SK-N-SH (cell line): ENCODE measurements at regions of chr10 and their contacts with region 1.

Region 1: GRCh38 chr10:73940634-73941221 is 29.8 kb downstream of the PLAU start:
- DNase-seq: peak; percentile 91
- H3K4me3 ChIP-seq: peak overlapping the region in 1 of 2 experiments; percentile 14; a peak in 1 of 4 replicates
- H3K27ac ChIP-seq: peak overlapping the region in 1 of 2 experiments; percentile 12; a peak in 1 of 4 replicates
- H3K4me1 ChIP-seq: peaks cover 0 to 10% of the 10 kb centered on the region in 2 experiments; a peak in 2 of 4 replicates
- H3K27me3 ChIP-seq: no peaks in the 10 kb centered on the region
- CTCF ChIP-seq: peak; percentile 97
- EP300 ChIP-seq: no peak
- RAD21 ChIP-seq: peak; percentile 84

Region 2: GRCh38 chr10:73837072-73837471 is 103.7 kb before region 1 on chr10:
- CTCF ChIA-PET with region 1: interaction called, 11 read pairs
- POLR2A ChIA-PET with region 1: no interaction called
- DNase-seq: no peak
- H3K4me3 ChIP-seq: no peak overlapping the region
- H3K27ac ChIP-seq: peak overlapping the region in 1 of 2 experiments; percentile 56; a peak in 2 of 4 replicates
- H3K4me1 ChIP-seq: no peaks in the 10 kb centered on the region; a peak in 1 of 4 replicates
- H3K27me3 ChIP-seq: no peaks in the 10 kb centered on the region
- CTCF ChIP-seq: no peak
- EP300 ChIP-seq: no peak
- RAD21 ChIP-seq: no peak

Region 3: DNA sequence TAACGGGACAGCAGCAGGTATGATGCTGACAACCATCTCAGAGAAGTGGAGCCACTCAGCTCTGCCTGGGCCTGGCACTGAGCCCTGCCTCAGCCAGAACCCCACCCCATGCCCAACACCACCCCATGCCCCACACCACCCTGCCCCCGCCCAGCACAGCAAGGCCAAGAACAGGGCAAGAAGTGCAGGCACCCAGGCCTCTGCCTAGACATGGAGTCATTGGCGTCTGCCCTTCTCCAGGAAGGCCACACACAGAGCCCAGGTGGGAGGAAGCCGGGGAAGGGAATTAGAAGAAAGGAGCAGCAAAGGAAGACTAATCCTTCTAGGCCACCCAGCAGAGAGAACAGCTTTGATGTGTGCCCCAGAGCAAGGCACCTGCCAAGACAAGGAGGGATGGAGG is 85.3 kb before region 1 on chr10:
- CTCF ChIA-PET with region 1: interaction called, 50 read pairs
- POLR2A ChIA-PET with region 1: no interaction called
- DNase-seq: no peak
- H3K4me3 ChIP-seq: no peak overlapping the region
- H3K27ac ChIP-seq: no peak overlapping the region
- H3K4me1 ChIP-seq: peaks cover 0 to 12% of the 10 kb centered on the region in 2 experiments; a peak in 1 of 4 replicates
- H3K27me3 ChIP-seq: no peaks in the 10 kb centered on the region
- CTCF ChIP-seq: no peak
- EP300 ChIP-seq: no peak
- RAD21 ChIP-seq: no peak

Region 4: DNA sequence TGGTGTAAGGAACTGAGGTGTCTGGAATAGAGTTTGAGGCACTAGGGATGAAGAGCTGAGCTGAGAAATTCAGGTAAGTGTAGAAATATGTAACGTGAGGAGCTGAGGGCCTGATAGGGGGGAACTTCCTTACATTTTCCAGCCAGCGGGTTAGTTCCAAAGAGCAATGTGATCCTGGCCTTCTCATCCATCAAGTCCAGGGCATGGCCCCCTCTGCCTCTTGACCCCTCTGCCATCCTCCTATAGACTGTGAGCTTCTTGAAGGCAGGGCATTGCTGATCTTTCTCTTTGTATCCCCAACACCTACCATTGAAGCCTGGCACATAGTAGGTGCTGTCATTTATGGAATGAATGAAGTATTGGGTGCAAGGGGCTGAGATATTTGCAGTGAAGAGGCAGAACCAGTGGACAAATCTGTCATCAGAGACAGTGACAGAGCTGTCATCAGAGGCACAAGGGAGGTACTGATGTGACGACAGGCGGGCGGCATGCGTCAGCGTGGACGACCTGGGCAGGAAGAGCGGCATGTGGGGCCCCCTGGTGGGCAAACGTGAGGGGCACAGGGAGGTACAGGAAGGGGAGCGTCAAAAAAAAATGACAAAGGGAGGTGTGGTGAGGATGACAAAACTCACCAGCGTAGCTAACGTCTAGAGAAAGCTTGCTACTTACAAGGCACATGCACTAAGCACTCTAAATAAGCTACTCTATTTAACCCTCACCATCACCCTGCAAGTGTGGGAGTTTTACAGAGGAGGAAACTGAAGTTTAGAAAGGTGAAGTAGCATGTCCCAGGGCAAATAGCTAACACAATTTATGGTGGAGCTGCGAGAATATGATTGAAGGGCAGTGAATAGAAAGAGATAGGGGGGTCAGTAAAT is 61.2 kb before region 1 on chr10:
- CTCF ChIA-PET with region 1: interaction called, 472 read pairs
- POLR2A ChIA-PET with region 1: no interaction called
- DNase-seq: peak; percentile 89
- H3K4me3 ChIP-seq: no peak overlapping the region; a peak in 1 of 4 replicates
- H3K27ac ChIP-seq: no peak overlapping the region
- H3K4me1 ChIP-seq: peaks cover 3% of the 10 kb centered on the region in 2 experiments; a peak in 2 of 4 replicates
- H3K27me3 ChIP-seq: no peaks in the 10 kb centered on the region
- CTCF ChIP-seq: peak; percentile 91
- EP300 ChIP-seq: no peak
- RAD21 ChIP-seq: peak; percentile 87

Region 5: DNA sequence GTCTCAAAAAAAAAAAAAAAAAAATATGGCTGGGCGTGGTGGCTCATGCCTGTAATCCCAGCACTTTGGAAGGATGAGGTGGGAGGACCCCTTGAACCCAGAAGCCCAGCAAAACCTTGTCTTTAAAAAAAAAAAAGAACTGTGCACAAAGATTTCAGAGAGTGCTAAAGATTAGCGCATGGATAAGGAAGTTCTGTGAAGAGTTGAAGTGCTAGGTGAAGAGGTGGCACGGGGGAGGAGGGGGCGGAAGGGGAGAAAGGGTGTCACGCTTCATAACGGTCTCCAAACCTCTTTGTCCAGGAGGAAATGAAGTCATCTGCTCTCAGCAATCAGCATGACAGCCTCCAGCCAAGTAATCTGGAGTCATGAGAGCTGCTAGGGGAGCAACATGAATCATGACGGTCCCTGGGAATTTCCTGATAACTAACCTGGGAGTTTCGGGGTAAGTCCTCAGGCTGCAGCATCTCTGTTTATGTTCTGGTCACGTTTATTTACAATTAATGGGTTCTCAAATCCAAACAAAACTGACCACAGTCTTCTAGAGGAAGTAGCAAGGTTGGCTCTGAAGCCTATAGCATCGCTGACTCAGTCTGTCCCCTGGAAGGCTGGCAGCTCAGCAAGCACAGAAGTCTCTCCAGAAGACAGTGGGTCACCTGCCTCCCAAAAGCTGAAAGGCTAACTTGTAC is 31.7 kb before region 1 on chr10:
- CTCF ChIA-PET with region 1: interaction called, 19 read pairs
- POLR2A ChIA-PET with region 1: no interaction called
- DNase-seq: no peak
- H3K4me3 ChIP-seq: 0 out of 4 replicates have a peak overlapping the region, but pooled peaks of 1 of the 2 experiments have one; percentile 9
- H3K27ac ChIP-seq: peak overlapping the region in 1 of 2 experiments; percentile 92; a peak in 3 of 4 replicates
- H3K4me1 ChIP-seq: peaks cover 15 to 20% of the 10 kb centered on the region in 2 experiments; a peak in 2 of 4 replicates
- H3K27me3 ChIP-seq: no peaks in the 10 kb centered on the region
- CTCF ChIP-seq: no peak
- EP300 ChIP-seq: peak in 1 of 2 experiments; percentile 82; a peak in 1 of 4 replicates
- RAD21 ChIP-seq: no peak

Region 6: GRCh38 chr10:73956476-73957359 is 16.0 kb after region 1 on chr10:
- CTCF ChIA-PET with region 1: interaction called, 22 read pairs
- POLR2A ChIA-PET with region 1: no interaction called
- DNase-seq: no peak
- H3K4me3 ChIP-seq: no peak overlapping the region
- H3K27ac ChIP-seq: peak overlapping the region; percentile 33 to 45; a peak in 2 of 4 replicates
- H3K4me1 ChIP-seq: peaks cover 2 to 12% of the 10 kb centered on the region in 2 experiments; a peak in 2 of 4 replicates
- H3K27me3 ChIP-seq: no peaks in the 10 kb centered on the region
- CTCF ChIP-seq: no peak
- EP300 ChIP-seq: no peak
- RAD21 ChIP-seq: no peak

Region 7: GRCh38 chr10:74081192-74081803 is 140.6 kb after region 1 on chr10:
- CTCF ChIA-PET with region 1: interaction called, 10 read pairs
- POLR2A ChIA-PET with region 1: no interaction called
- DNase-seq: peak; percentile 70
- H3K4me3 ChIP-seq: no peak overlapping the region; a peak in 1 of 4 replicates
- H3K27ac ChIP-seq: peak overlapping the region; percentile 75 to 82; a peak in 3 of 4 replicates
- H3K4me1 ChIP-seq: peaks cover 2 to 57% of the 10 kb centered on the region in 2 experiments; a peak in 3 of 4 replicates
- H3K27me3 ChIP-seq: no peaks in the 10 kb centered on the region
- CTCF ChIP-seq: peak; percentile 85
- EP300 ChIP-seq: no peak
- RAD21 ChIP-seq: peak; percentile 83

Region 8: GRCh38 chr10:74900297-74900696 is 959.6 kb after region 1 on chr10:
- CTCF ChIA-PET with region 1: no interaction called
- POLR2A ChIA-PET with region 1: no interaction called
- DNase-seq: no peak
- H3K4me3 ChIP-seq: no peak overlapping the region
- H3K27ac ChIP-seq: no peak overlapping the region
- H3K4me1 ChIP-seq: peaks cover 20 to 25% of the 10 kb centered on the region in 2 experiments; a peak in 3 of 4 replicates
- H3K27me3 ChIP-seq: no peaks in the 10 kb centered on the region
- CTCF ChIP-seq: no peak
- EP300 ChIP-seq: no peak
- RAD21 ChIP-seq: no peak